A673 (cell line): ENCODE measurements at regions of chr6 and their contacts with region 1.

Region 1: GRCh38 chr6:111721753-111722154 is 116.1 kb upstream of the TRAF3IP2 start:
- DNase-seq: peak; percentile 64
- H3K4me3 ChIP-seq: no peak overlapping the region
- H3K27ac ChIP-seq: peak overlapping the region; percentile 2
- H3K4me1 ChIP-seq: peaks cover 12% of the 10 kb centered on the region
- H3K27me3 ChIP-seq: no peaks in the 10 kb centered on the region
- CTCF ChIP-seq: peak; percentile 76

Region 2: GRCh38 chr6:111631903-111632460 is 89.8 kb before region 1 on chr6:
- CTCF ChIA-PET with region 1: no interaction called
- POLR2A ChIA-PET with region 1: no interaction called
- intact Hi-C with region 1: no loop called
- DNase-seq: peak; percentile 26
- H3K4me3 ChIP-seq: no peak overlapping the region
- H3K27ac ChIP-seq: no peak overlapping the region
- H3K4me1 ChIP-seq: peaks cover 8% of the 10 kb centered on the region
- H3K27me3 ChIP-seq: no peaks in the 10 kb centered on the region
- CTCF ChIP-seq: no peak

Region 3: GRCh38 chr6:111888928-111889695 is 167.4 kb after region 1 on chr6:
- CTCF ChIA-PET with region 1: no interaction called
- POLR2A ChIA-PET with region 1: no interaction called
- intact Hi-C with region 1: loop called (anchors 10 kb)
- DNase-seq: peak; percentile 46
- H3K4me3 ChIP-seq: peak overlapping the region; percentile 12
- H3K27ac ChIP-seq: no peak overlapping the region
- H3K4me1 ChIP-seq: peaks cover 13% of the 10 kb centered on the region
- H3K27me3 ChIP-seq: no peaks in the 10 kb centered on the region
- CTCF ChIP-seq: no peak